ENCODE measurements at regions of chr17 and their contacts with region 1.

Region 1: GRCh38 chr17:50547035-50547735 is at the start of gene SPATA20:
- DNase-seq: peak; percentile 92 to 95 (median 93)
- H3K4me3 ChIP-seq: peak within 1 kb of the TSS; percentile 63
- H3K27ac ChIP-seq: peak within 1 kb of the TSS; percentile 29 to 90
- H3K4me1 ChIP-seq: peaks cover 9% of the 10 kb centered on the region
- H3K27me3 ChIP-seq: no peaks in the 10 kb centered on the region
- CTCF ChIP-seq: peak; percentile 97 to 99 (median 99)
- EP300 ChIP-seq: no peak
- POLR2A ChIP-seq: peak; percentile 74
- total RNA-seq, gene SPATA20: 53.7 to 81.2 (median 62.6) TPM

Region 2: DNA sequence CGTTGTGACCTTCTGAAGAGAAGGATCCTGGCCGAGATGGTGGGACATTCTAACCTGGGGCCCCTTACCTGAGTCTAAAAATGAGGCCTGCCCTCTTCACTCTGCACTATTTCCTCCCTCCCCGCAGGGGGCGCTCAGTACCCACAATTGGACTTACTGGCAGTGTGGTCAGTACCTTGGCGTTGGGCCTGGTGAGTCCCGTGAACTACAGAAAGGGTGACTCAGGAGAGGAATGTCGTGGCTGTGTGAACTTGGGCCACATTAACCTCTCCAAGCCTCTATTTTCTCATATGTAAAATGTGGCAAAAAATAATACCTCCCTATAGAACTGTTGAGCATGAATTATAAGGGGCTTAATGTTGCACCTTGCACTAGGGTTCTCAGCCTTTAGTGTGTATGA is 64.7 kb before region 1 on chr17:
- intact Hi-C with region 1: loop called in 2 of 4 experiments (anchors 5 kb)
- DNase-seq: peak; percentile 95 to 98 (median 97)
- H3K4me3 ChIP-seq: no peak overlapping the region
- H3K27ac ChIP-seq: peak overlapping the region in 1 of 2 donors; percentile 51
- H3K4me1 ChIP-seq: peaks cover 8% of the 10 kb centered on the region
- H3K27me3 ChIP-seq: no peaks in the 10 kb centered on the region
- CTCF ChIP-seq: peak; percentile 78 to 95 (median 94)
- EP300 ChIP-seq: peak; percentile 80
- POLR2A ChIP-seq: no peak

Region 3: DNA sequence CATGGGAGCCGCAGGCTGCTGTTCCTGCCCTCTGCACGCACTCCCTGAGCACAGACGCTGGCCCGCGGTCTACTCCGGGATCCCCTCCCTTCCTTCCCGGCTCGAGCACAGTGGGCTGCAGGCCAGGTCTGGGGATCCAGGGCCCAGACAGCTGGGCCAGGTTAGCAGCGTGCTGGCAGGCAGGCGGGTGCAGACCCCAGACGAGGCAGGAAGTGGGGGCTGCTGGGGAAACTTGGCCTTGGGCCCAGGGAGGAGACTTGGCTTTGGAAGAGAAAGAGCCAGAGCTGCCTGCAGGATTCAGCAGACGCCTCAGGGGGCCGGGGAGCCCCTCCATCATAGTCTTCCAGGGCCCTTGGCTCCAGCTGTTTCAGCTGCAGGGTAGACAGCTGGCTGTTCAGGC is 57.3 kb after region 1 on chr17:
- intact Hi-C with region 1: no loop called
- DNase-seq: peak; percentile 84 to 96 (median 94)
- H3K4me3 ChIP-seq: no peak overlapping the region
- H3K27ac ChIP-seq: peak overlapping the region in 1 of 2 donors; percentile 17
- H3K4me1 ChIP-seq: peaks cover 11% of the 10 kb centered on the region
- H3K27me3 ChIP-seq: no peaks in the 10 kb centered on the region
- CTCF ChIP-seq: no peak
- EP300 ChIP-seq: no peak
- POLR2A ChIP-seq: no peak

Region 4: DNA sequence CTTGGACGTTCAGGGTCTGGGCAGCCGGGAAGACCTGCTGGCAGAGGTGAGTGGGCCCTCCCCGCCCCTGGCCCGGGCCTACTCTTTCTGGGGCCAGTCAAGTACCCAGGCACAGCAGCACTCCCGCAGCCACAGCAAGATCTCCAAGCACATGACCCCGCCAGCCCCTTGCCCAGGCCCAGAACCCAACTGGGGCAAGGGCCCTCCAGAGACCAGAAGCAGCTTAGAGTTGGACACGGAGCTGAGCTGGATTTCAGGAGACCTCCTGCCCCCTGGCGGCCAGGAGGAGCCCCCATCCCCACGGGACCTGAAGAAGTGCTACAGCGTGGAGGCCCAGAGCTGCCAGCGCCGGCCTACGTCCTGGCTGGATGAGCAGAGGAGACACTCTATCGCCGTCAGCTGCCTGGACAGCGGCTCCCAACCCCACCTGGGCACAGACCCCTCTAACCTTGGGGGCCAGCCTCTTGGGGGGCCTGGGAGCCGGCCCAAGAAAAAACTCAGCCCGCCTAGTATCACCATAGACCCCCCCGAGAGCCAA is 78.9 kb after region 1 on chr17:
- intact Hi-C with region 1: loop called (anchors 2 to 5 kb)
- DNase-seq: peak; percentile 74 to 88 (median 83)
- H3K4me3 ChIP-seq: no peak overlapping the region
- H3K27ac ChIP-seq: no peak overlapping the region
- H3K4me1 ChIP-seq: peaks cover 3% of the 10 kb centered on the region
- H3K27me3 ChIP-seq: no peaks in the 10 kb centered on the region
- CTCF ChIP-seq: peak; percentile 75 to 81 (median 77)
- EP300 ChIP-seq: no peak
- POLR2A ChIP-seq: no peak

Region 5: DNA sequence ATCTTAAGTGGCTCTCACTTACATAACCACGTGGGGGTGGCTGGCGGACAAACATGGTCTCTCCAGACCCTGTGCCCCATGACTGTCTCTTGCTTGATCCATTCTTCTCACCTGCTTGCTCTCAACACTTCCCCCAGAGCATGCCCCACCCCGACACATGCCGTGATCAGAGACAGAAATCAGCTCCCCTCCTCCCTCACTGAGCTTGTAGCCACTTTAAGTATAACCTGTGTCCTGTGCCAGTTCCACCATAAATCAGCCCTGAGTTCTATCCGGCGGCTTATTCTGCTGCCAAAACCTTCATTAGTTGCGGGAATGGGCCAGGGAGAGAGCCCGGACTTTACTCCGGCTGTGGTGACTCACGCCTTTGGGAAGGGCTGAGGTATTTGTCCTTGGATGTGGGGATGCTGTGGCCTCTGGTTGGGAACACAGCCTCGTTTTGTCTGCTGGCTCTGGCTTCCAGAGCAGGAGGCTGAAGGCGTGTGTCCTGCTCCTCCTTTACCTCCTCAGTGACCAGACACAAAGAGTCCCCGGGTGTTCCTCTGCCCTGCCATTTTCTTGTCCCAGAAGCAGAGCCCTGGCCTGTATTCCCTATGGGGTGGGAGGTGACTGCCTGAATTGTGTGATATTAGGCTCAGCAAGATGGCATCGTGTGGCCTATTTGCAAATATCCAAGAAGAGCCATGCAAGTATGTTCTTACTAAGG is 139.5 kb after region 1 on chr17:
- intact Hi-C with region 1: loop called in 2 of 4 experiments (anchors 5 kb)
- DNase-seq: peak; percentile 83 to 94 (median 87)
- H3K4me3 ChIP-seq: no peak overlapping the region
- H3K27ac ChIP-seq: peak overlapping the region; percentile 53 to 85
- H3K4me1 ChIP-seq: peaks cover 25% of the 10 kb centered on the region
- H3K27me3 ChIP-seq: no peaks in the 10 kb centered on the region
- CTCF ChIP-seq: no peak
- EP300 ChIP-seq: peak; percentile 69
- POLR2A ChIP-seq: no peak

Region 6: GRCh38 chr17:50765454-50766221 is 218.5 kb after region 1 on chr17:
- intact Hi-C with region 1: no loop called
- DNase-seq: peak in 1 of 5 donors; percentile 9
- H3K4me3 ChIP-seq: no peak overlapping the region
- H3K27ac ChIP-seq: no peak overlapping the region
- H3K4me1 ChIP-seq: no peaks in the 10 kb centered on the region
- H3K27me3 ChIP-seq: no peaks in the 10 kb centered on the region
- CTCF ChIP-seq: no peak
- EP300 ChIP-seq: no peak
- POLR2A ChIP-seq: no peak

Region 7: DNA sequence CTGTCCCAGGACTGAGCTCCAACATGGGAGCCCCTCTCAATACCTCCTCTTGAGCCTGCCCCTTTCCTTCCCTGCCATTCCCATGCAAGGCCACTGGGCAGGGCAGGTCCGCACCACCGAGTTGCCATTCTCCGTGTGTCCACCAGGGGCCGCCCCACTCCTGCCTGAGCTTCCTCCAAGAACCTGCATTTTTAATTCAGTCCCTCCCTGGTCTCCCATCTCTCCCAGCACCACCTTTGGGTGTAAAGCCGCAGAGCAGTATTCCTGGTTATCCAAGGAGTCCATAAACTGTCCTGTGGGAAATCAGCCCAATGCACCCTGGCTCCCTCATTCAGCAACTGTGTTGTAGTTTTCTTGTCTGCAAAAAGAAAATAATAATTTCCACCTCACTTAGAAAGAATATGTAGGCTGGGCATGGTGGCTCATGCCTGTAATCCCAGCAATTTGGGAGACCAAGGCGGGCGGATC is 236.0 kb after region 1 on chr17:
- intact Hi-C with region 1: loop called in 2 of 4 experiments (anchors 5 to 10 kb)
- DNase-seq: peak; percentile 79 to 94 (median 89)
- H3K4me3 ChIP-seq: no peak overlapping the region
- H3K27ac ChIP-seq: no peak overlapping the region
- H3K4me1 ChIP-seq: peaks cover 8% of the 10 kb centered on the region
- H3K27me3 ChIP-seq: no peaks in the 10 kb centered on the region
- CTCF ChIP-seq: peak; percentile 93 to 99 (median 98)
- EP300 ChIP-seq: no peak
- POLR2A ChIP-seq: no peak

Region 8: GRCh38 chr17:50841949-50842354 is 294.8 kb after region 1 on chr17:
- intact Hi-C with region 1: loop called in 3 of 4 experiments (anchors 5 to 10 kb)
- DNase-seq: peak; percentile 68 to 89 (median 84)
- H3K4me3 ChIP-seq: no peak overlapping the region
- H3K27ac ChIP-seq: peak overlapping the region; percentile 5 to 45
- H3K4me1 ChIP-seq: no peaks in the 10 kb centered on the region
- H3K27me3 ChIP-seq: no peaks in the 10 kb centered on the region
- CTCF ChIP-seq: peak; percentile 60 to 85 (median 80)
- EP300 ChIP-seq: no peak
- POLR2A ChIP-seq: no peak

Region 9: GRCh38 chr17:51189628-51190027 is 642.4 kb after region 1 on chr17:
- intact Hi-C with region 1: no loop called
- DNase-seq: no peak
- H3K4me3 ChIP-seq: no peak overlapping the region
- H3K27ac ChIP-seq: no peak overlapping the region
- H3K4me1 ChIP-seq: peaks cover 5% of the 10 kb centered on the region
- H3K27me3 ChIP-seq: no peaks in the 10 kb centered on the region
- CTCF ChIP-seq: no peak
- EP300 ChIP-seq: no peak
- POLR2A ChIP-seq: no peak

Measured in ovary (tissue), 10 donors.